ENCODE measurements at regions of chr13 and their contacts with region 1.

Region 1: DNA sequence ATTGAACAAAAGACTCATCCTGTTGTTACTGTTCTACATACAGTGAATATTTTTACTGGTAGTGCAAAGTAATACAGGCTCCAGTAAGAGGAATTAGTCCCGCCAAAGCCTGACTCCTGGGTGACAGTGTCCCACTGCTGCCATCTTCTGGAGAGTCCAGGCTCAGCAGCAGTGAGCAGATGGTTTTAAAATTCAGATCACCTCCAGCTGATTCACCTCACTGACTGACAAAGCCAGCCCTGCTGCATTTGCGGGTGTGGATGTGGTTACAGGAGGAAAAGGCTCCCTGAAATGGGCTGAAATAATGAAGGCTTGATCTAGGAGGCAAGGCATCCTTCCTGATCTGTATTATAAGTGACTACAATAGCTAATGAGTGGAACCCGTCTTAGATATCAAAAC is 18.3 kb downstream of the PABPC3 start:
- DNase-seq: peak; percentile 89
- H3K4me3 Mint-ChIP-seq: no peak overlapping the region
- H3K27ac Mint-ChIP-seq: no peak overlapping the region
- H3K4me1 Mint-ChIP-seq: no peaks in the 10 kb centered on the region
- H3K27me3 Mint-ChIP-seq: peaks cover 34% of the 10 kb centered on the region

Region 2: DNA sequence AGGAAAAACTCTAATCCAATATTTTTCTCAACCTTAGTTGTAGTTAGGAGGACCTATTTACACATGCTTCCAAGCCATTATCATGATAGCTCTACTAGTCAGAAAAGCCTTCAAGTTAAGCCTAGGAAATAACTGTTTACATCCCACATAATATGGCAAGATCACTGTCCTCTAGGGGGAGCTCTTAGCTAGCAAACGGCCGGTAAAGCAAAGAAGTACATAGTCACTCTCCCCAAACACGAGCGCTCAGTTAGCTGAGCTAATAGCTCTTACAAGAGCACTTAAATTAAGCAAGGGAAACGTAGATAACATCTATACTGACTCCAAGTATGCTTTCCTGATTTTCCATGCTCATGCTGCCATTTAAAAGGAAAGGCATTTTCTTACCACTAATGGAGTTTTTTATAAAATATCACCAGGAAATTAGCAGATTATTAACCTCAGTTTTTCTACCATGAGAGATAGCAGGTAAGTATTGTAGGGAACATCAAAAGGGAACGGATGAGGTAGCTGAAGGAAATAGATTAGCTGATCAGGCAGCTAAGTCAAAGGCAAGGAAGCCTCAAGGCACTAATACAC is 118.9 kb before region 1 on chr13:
- intact Hi-C with region 1: loop called (anchors 5 kb)
- DNase-seq: peak; percentile 89
- H3K4me3 Mint-ChIP-seq: no peak overlapping the region
- H3K27ac Mint-ChIP-seq: no peak overlapping the region
- H3K4me1 Mint-ChIP-seq: peaks cover 3% of the 10 kb centered on the region
- H3K27me3 Mint-ChIP-seq: peaks cover 24% of the 10 kb centered on the region

Region 3: DNA sequence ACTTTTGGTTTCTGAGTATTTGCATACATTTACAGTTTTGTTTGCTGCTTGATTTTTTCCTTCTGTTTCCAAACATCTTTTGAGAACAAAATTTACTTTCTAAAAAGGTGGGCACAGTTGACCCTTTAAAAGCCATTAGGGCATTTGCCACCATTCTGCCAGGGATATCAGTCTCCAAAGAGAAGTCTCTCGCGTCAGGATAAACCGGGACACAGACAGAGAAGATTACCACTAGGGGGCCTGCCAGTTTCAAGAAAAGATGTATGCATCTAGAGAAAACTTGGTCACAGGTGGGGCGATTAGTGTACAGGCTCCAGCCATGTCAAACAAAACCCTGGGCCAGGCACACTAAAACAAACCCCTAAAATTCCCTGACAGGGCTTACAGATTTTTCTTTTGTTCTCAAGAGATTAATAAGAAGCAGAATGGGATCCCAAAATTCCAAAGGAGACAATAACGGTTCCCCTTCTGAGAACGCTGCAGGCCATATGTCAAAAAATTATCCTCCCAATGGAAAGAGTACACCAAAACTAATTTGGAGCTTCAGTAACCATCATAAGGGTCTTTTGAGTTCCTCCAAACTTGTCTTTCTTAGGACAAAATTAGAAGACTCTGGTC is 29.0 kb before region 1 on chr13:
- intact Hi-C with region 1: loop called (anchors 1 kb)
- DNase-seq: peak; percentile 65
- H3K4me3 Mint-ChIP-seq: no peak overlapping the region
- H3K27ac Mint-ChIP-seq: no peak overlapping the region
- H3K4me1 Mint-ChIP-seq: no peaks in the 10 kb centered on the region
- H3K27me3 Mint-ChIP-seq: peaks cover 15% of the 10 kb centered on the region

Region 4: DNA sequence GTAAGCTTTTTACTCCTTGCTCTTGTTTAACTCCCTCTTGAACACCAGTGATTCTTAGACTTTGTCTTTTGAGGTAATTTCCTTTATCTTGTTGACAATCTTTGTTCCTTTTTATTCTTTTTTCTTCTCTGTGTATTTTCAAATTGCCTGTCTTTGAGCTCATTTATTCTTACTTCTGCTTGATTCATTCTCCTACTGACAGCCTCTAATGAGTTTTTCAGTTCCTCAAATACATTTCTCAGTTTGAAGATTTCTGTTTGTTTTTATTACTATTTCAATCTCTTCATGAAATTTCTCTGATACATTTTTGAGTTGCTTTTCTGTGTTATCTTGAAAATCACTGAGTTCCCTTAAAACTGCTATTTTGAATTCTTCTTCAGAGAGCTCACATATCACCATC is 411.7 kb after region 1 on chr13:
- intact Hi-C with region 1: no loop called
- DNase-seq: no peak
- H3K4me3 Mint-ChIP-seq: no peak overlapping the region
- H3K27ac Mint-ChIP-seq: no peak overlapping the region
- H3K4me1 Mint-ChIP-seq: no peaks in the 10 kb centered on the region
- H3K27me3 Mint-ChIP-seq: peaks cover 19% of the 10 kb centered on the region

Region 5: GRCh38 chr13:25886438-25887214 is 772.4 kb after region 1 on chr13:
- intact Hi-C with region 1: no loop called
- DNase-seq: no peak
- H3K4me3 Mint-ChIP-seq: no peak overlapping the region
- H3K27ac Mint-ChIP-seq: peak overlapping the region; percentile 35
- H3K4me1 Mint-ChIP-seq: peaks cover 41% of the 10 kb centered on the region
- H3K27me3 Mint-ChIP-seq: no peaks in the 10 kb centered on the region